Activated CD4-positive, alpha-beta memory T cell treated with anti-CD3 and anti-CD28 coated beads for 36 hours (primary cell): ENCODE measurements at regions of chr2 and their contacts with region 1.

Region 1: GRCh38 chr2:12293874-12294273 is 422.9 kb upstream of the TRIB2 start:
- DNase-seq: no peak
- H3K4me3 Mint-ChIP-seq: no peak overlapping the region
- H3K27ac Mint-ChIP-seq: no peak overlapping the region
- H3K4me1 Mint-ChIP-seq: peaks cover 43% of the 10 kb centered on the region
- H3K27me3 Mint-ChIP-seq: peaks cover 20% of the 10 kb centered on the region

Region 2: GRCh38 chr2:11829947-11830707 is 463.7 kb before region 1 on chr2:
- CTCF ChIA-PET with region 1: no interaction called
- POLR2A ChIA-PET with region 1: interaction called, 4 read pairs
- intact Hi-C with region 1: loop called (anchors 1 kb)
- DNase-seq: peak; percentile 74
- H3K4me3 Mint-ChIP-seq: peak overlapping the region; percentile 49
- H3K27ac Mint-ChIP-seq: peak overlapping the region; percentile 72
- H3K4me1 Mint-ChIP-seq: peaks cover 41% of the 10 kb centered on the region
- H3K27me3 Mint-ChIP-seq: peaks cover 32% of the 10 kb centered on the region

Region 3: GRCh38 chr2:12005886-12006681 is 287.8 kb before region 1 on chr2:
- CTCF ChIA-PET with region 1: no interaction called
- POLR2A ChIA-PET with region 1: no interaction called
- intact Hi-C with region 1: loop called (anchors 5 kb)
- DNase-seq: peak; percentile 83
- H3K4me3 Mint-ChIP-seq: peak overlapping the region; percentile 3
- H3K27ac Mint-ChIP-seq: no peak overlapping the region
- H3K4me1 Mint-ChIP-seq: peaks cover 22% of the 10 kb centered on the region
- H3K27me3 Mint-ChIP-seq: peaks cover 62% of the 10 kb centered on the region

Region 4: DNA sequence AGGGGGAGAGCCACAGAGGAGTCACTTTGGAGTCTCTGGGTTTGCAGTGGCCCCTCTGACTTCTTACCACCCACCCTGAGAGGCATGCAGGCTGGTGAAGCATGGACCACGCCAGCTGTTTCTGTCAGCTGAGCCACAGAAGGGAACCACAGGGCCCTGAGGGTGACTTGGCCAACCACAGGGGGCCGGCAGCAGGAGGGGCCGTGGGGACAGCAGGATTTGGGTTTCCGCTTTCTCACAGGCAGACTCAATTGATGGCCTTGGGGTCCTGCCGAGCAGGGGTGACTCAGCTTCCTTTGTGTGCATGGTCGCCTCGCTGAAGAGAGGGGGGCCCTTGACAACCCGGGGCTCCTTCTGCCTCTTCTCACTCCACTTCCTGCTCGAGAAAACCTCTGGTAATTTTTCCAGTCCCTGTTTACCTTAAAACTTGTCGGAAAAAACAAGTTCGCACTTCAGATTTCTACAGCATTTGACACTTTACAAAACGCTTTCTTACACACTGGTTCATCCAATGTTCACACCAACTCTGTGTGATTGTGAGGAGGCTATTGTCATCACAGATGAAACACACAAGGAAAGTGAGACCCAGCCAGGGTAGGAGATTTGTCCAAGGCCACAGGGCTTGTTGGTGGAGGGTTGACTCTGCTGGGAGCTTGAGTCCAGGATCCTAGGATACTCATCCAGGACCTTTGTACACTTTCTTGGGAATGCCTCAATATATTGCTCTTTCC is 236.3 kb before region 1 on chr2:
- CTCF ChIA-PET with region 1: no interaction called
- POLR2A ChIA-PET with region 1: no interaction called
- intact Hi-C with region 1: no loop called
- DNase-seq: peak; percentile 14
- H3K4me3 Mint-ChIP-seq: no peak overlapping the region
- H3K27ac Mint-ChIP-seq: no peak overlapping the region
- H3K4me1 Mint-ChIP-seq: peaks cover 9% of the 10 kb centered on the region
- H3K27me3 Mint-ChIP-seq: peaks cover 1% of the 10 kb centered on the region

Region 5: GRCh38 chr2:12416600-12416999 is 122.7 kb after region 1 on chr2:
- CTCF ChIA-PET with region 1: no interaction called
- POLR2A ChIA-PET with region 1: no interaction called
- intact Hi-C with region 1: loop called (anchors 2 kb)
- DNase-seq: peak; percentile 69
- H3K4me3 Mint-ChIP-seq: no peak overlapping the region
- H3K27ac Mint-ChIP-seq: no peak overlapping the region
- H3K4me1 Mint-ChIP-seq: peaks cover 43% of the 10 kb centered on the region
- H3K27me3 Mint-ChIP-seq: no peaks in the 10 kb centered on the region

Region 6: GRCh38 chr2:12555012-12555645 is 261.3 kb after region 1 on chr2:
- CTCF ChIA-PET with region 1: no interaction called
- POLR2A ChIA-PET with region 1: no interaction called
- intact Hi-C with region 1: loop called (anchors 2 kb)
- DNase-seq: peak; percentile 52
- H3K4me3 Mint-ChIP-seq: peak overlapping the region; percentile 21
- H3K27ac Mint-ChIP-seq: peak overlapping the region; percentile 80
- H3K4me1 Mint-ChIP-seq: peaks cover 40% of the 10 kb centered on the region
- H3K27me3 Mint-ChIP-seq: no peaks in the 10 kb centered on the region